ENCODE measurements at regions of chr16 and their contacts with region 1.

Region 1: GRCh38 chr16:15650019-15650697 is at the start of gene NDE1:
- DNase-seq: peak; percentile 82
- H3K4me3 Mint-ChIP-seq: peak within 1 kb of the TSS; percentile 100
- H3K27ac Mint-ChIP-seq: peak within 1 kb of the TSS; percentile 100
- H3K4me1 Mint-ChIP-seq: peaks cover 19% of the 10 kb centered on the region
- H3K27me3 Mint-ChIP-seq: no peaks in the 10 kb centered on the region
- total RNA-seq, gene NDE1: 87.4 and 91.8 TPM in 2 replicates

Region 2: DNA sequence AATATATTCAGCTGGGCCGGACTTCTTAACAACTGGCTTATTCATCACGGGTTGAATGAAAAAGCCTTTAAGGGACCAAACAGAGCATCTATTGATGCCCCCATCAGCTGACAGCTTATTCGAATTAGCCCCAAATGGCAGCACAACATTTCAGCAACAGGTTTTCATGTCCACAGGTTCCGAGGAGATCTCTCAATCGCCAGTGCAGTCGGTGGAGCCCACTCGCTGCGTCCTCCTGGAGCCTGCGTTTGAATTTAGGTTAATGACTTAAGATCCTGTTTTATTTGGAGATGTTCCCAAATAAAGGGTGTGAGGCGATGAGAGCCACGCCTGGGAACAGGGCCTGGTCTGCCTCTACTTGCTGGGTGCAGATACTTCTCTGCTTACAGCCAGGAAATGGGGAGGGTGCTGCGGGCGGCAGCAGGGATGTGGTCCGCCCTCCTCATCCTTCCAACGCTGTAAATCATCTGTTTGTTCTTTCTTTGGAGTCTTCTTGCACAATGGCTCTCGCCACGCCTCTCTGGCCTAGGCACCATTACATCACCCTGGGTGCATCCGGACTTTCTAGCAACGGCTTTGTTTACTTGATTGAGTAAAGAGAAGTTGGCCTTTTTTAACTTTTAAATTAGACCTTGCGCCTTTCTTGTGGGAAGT is 22.5 kb after region 1 on chr16:
- intact Hi-C with region 1: loop called (anchors 1 kb)
- DNase-seq: peak; percentile 84
- H3K4me3 Mint-ChIP-seq: peak overlapping the region; percentile 75
- H3K27ac Mint-ChIP-seq: peak overlapping the region; percentile 97
- H3K4me1 Mint-ChIP-seq: peaks cover 57% of the 10 kb centered on the region
- H3K27me3 Mint-ChIP-seq: no peaks in the 10 kb centered on the region